Transverse colon (tissue), 4 donors: ENCODE measurements at regions of chr4 and their contacts with region 1.

Region 1: DNA sequence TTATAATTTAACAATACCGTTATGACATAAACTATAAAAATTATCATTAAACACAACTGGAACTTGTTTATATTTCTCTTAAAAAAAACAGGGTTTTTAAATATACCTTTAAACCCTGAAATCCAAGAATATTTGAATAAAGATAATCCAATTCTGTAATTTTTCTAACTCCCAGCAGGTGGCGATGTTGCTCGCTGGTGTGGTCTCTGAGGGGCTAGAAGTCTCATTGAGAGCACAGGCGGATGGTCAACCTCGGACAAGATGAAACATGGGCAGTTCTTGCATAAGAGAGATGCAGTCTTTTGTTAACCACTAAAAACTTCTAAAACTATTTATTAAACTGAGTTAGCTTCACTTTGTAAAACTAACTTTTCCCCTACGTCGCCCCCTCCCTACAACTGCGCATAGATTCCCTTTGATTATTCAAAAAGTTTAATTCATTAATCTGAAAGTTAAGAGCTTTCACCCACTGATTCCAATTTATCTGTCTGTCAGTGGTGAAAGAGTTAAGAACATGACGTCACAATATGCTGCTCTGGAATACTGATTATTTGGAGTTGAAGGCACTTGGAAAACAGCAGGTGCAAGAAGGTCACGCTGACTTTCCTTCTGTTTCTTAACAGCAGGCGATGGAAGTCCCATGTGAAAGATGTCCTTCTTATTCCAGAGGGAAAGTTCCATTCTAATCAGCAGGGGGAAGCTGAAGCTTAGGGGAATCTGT is 29.5 kb downstream of the DMP1 start:
- DNase-seq: peak; percentile 19
- H3K4me3 ChIP-seq: no peak overlapping the region
- H3K27ac ChIP-seq: no peak overlapping the region
- H3K4me1 ChIP-seq: no peaks in the 10 kb centered on the region
- H3K27me3 ChIP-seq: no peaks in the 10 kb centered on the region
- CTCF ChIP-seq: peak; percentile 52 to 77 (median 67)
- EP300 ChIP-seq: no peak
- POLR2A ChIP-seq: no peak

Region 2: GRCh38 chr4:87017580-87018342 is 661.8 kb before region 1 on chr4:
- in situ Hi-C with region 1: no loop called
- intact Hi-C with region 1: no loop called
- DNase-seq: no peak
- H3K4me3 ChIP-seq: no peak overlapping the region
- H3K27ac ChIP-seq: peak overlapping the region; percentile 20 to 60 (median 53)
- H3K4me1 ChIP-seq: peaks cover 25 to 73% (median 53%) of the 10 kb centered on the region in 4 donors
- H3K27me3 ChIP-seq: no peaks in the 10 kb centered on the region
- CTCF ChIP-seq: no peak
- EP300 ChIP-seq: no peak
- POLR2A ChIP-seq: no peak

Region 3: GRCh38 chr4:87838890-87839591 is 159.4 kb after region 1 on chr4:
- in situ Hi-C with region 1: loop called (anchors 5 to 10 kb)
- intact Hi-C with region 1: loop called (anchors 10 kb)
- DNase-seq: no peak
- H3K4me3 ChIP-seq: no peak overlapping the region
- H3K27ac ChIP-seq: no peak overlapping the region
- H3K4me1 ChIP-seq: no peaks in the 10 kb centered on the region
- H3K27me3 ChIP-seq: no peaks in the 10 kb centered on the region
- CTCF ChIP-seq: peak; percentile 46 to 76 (median 66)
- EP300 ChIP-seq: no peak
- POLR2A ChIP-seq: no peak

Region 4: GRCh38 chr4:88831031-88831430 is 1151.4 kb after region 1 on chr4:
- in situ Hi-C with region 1: no loop called
- intact Hi-C with region 1: no loop called
- DNase-seq: no peak
- H3K4me3 ChIP-seq: no peak overlapping the region
- H3K27ac ChIP-seq: peak overlapping the region in 1 of 4 donors; percentile 1
- H3K4me1 ChIP-seq: peaks cover 0 to 20% (median 2%) of the 10 kb centered on the region in 4 donors
- H3K27me3 ChIP-seq: no peaks in the 10 kb centered on the region
- CTCF ChIP-seq: no peak
- EP300 ChIP-seq: no peak
- POLR2A ChIP-seq: no peak